ENCODE measurements at regions of chr7 and their contacts with region 1.

Region 1: DNA sequence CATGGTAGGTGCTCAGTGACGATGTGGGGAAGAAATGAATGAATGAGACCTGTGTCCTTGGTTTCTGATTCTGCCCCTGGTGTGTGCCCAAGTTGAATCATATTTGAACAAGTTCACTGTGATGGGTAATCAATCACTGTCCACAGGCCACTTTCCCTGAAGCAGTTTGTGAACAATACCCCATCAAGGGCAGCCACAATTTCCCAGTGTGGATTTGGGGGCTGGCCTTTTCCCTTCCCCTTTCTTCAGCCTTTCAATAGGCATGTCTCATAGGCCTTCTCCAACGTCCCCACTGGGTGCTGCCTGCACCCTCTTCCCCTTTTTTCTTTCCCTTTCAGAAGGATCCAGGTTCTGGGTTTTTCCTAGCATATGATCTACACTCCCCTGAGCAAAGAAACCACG is 64.7 kb downstream of the CREB5 start:
- DNase-seq: no peak
- ATAC-seq: no peak
- H3K4me3 ChIP-seq: no peak overlapping the region
- H3K27ac ChIP-seq: no peak overlapping the region
- H3K4me1 ChIP-seq: peaks cover 2 to 8% of the 10 kb centered on the region in 2 donors
- H3K27me3 ChIP-seq: no peaks in the 10 kb centered on the region

Region 2: GRCh38 chr7:28456044-28456443 is 21.0 kb before region 1 on chr7:
- intact Hi-C with region 1: loop called in 1 of 2 experiments (anchors 2 kb)
- DNase-seq: no peak
- ATAC-seq: no peak
- H3K4me3 ChIP-seq: no peak overlapping the region
- H3K27ac ChIP-seq: no peak overlapping the region
- H3K4me1 ChIP-seq: no peaks in the 10 kb centered on the region
- H3K27me3 ChIP-seq: no peaks in the 10 kb centered on the region